Posterior vena cava (tissue), 2 donors: ENCODE measurements at regions of chr12 and their contacts with region 1.

Region 1: DNA sequence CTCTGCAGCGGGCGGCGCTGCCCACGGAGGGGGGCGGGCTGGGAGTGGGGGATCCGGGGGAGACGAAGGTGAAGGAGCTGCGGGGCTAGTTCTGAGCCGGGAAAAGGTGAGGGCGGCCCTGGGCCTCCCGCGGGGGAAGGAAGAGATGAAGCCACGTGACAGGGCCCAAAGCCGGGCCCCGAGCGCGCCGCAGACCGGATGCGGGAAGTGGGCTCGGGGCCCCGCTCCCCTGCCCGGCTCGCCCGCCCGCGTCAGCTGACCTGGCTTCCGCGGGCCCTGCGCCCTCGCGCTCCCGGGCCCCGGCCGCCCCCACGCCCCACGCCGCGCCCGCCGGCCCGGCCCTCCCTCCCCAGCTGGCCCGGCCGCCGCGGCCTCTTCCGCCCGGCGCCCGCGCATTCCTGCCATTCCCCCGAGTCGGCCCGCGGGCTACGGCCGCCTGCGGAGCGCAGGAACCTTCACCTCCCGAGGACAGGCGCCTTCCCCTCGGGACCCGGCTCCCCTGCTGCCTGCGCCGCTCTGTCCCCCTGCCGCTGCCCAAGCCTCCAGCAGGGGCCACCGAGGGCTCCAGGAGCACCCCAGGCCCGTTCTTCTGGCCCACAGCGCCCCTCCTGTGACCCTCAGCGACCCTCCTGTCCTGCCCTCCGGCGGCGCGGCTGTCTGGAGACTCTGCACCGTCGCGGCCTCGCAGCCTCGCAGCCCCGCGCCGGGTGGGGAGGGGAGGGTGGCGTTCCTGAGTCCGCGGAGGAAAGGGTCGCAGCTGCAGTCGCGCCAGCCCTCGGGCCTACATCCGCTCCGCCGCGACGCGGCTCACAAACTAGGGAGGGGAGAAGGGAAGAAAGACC is 20.4 kb downstream of the NINJ2 start:
- DNase-seq: peak; percentile 92

Region 2: DNA sequence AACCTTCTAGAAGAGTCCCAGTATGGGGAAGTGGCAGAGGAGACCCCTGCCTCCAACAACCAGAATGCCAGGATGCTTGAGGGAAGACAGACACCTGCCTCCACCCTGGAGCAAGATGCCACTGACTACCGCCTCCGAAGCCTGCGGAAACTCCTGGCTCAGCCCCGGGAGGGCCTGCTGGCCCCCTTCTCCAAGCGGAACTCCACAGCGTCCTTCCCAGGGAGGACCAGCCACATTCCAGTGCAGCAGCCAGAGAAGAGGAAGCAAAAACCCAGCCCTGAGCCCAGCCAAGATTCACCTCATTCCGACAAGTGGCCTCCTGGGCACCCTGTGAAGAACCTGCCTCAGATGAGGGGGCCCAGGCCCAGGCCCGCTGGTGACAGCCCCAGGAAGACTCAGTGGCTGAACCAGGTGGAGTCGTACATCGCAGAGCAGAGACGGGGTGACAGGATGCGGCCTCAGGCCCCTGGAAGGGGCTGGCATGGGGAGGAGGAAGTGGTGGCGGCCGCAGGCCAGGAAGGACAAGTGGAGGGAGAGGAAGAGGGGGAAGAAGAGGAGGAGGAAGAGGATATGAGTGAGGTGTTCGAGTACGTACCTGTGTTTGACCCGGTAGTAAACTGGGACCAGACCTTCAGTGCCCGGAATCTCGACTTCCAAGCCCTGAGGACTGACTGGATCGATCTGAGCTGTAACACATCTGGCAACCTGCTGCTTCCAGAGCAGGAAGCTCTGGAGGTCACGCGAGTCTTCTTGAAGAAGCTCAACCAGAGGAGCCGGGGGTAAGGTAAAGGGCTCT is 89.5 kb before region 1 on chr12:
- intact Hi-C with region 1: no loop called
- DNase-seq: no peak

Region 3: DNA sequence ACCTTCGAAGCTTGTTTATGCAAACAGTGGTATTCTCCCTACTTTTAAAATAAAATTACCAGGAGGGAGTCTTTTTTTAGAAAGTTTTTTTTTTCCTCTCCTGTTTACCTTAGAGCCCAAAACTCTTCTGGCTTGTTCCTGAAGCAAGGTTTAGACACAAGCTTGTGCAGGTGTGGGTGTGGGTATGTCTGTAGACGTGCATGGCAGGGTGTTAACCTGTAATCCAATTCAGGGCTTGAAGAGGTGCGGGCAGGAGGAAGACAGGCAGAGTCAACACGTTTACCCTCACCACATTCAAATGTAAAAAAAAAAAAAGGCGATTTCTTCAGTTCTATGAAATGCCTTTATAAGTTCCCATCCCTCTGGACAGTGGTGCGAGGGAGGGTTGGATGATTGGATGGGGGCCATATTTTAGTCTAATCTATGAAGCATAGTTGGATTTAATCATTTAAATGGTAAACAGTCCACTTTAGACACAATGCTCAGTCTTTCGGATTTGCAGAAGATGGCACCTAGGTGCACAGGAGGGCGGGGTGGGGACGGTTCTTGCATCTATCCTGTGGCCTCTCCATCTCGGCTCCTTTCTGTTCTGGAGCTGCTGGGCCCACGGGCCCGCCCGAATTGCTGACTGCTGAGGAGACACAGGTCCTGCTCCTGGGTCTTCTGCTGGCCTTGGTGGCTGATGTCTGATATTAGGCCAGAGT is 21.4 kb after region 1 on chr12:
- intact Hi-C with region 1: loop called in 1 of 2 experiments (anchors 1 kb)
- DNase-seq: no peak

Region 4: DNA sequence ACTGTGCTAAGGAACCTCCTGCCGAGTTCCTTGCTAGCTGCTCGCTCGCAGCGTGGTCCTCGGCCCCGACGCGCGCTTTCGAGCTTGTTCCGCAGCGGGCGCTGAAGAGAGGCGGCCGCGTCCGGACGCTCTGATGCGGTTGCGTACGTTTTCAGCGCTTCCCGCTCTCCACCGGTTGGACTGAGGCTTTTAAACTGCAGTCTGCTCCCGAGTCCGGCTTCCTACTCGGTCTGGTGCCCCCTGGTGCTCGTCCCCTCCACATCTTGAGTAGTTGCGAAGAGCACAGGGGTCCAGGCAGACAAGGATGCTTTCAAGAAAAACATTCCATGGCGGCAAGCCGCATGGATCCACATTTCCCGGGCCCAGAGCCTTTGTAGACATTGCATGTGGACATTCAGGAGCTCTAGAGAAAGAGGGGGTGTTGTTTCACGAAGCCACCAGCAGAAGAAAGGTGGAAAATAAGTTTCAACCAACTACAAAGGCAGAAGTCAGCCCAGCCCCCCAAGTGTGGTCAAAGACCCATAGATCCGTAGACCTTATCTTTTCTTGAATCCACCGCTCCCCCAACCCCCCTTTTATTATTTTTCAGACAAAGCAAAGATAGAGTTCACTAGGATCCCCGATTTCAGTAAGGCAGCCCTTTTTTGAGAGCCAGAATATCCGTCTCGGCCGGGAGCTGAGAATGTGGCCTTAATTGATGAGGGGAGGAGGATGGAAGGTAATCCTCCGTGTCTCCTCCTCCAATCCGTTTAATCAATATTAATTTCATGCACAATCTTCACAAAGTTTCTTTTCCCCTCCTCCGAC is 108.5 kb after region 1 on chr12:
- intact Hi-C with region 1: loop called in 1 of 2 experiments (anchors 5 kb)
- DNase-seq: peak; percentile 97